CD4-positive, alpha-beta memory T cell (primary cell): ENCODE measurements at regions of chr9 and their contacts with region 1.

Region 1: DNA sequence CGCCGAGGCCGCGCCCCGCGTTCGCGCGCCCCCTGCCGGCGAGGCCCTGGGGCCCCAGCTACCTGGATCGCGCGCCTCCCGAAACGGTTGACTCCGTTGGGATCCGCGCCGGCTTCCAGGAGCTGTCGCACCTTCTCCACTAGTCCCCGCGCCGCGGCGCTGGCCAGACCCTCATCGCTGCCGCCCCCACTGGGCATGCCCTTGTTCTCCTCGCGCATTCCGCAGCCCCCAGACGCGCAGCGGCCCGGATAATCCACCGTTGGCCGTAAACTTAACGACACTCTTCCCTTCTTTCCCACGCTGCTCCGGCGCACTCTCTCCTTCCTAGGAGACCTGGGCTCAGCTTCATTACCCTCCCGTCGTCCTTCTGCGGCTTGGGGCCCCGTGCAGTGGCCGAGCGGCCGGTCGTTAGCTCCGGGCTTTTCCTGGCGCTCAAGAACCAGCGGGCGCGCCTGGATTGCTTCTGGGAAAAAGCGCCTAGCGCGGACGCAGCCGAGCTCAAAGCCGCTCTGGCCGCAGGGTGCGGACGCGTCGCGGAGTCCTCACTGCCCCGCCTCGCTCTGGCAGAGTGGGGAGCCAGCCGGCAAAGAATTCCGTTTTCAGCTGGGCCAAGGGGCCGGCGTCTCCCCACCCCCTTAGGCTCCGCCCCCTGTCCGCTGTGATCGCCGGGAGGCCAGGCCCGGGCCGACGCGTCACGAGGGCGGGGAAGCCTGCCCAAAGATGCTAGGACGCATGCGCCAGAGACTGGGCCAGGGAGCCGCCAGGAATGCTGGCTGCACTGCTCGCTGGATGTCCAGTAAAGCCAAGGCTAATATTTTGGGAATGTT is at the start of gene CDKN2B:
- DNase-seq: peak; percentile 64 to 71 (median 65)
- H3K4me3 ChIP-seq: peak within 1 kb of the TSS; percentile 8 to 65
- H3K4me3 Mint-ChIP-seq: peak within 1 kb of the TSS; percentile 69 to 90 (median 84)
- H3K27ac ChIP-seq: peak within 1 kb of the TSS; percentile 5
- H3K27ac Mint-ChIP-seq: peak within 1 kb of the TSS in 6 of 7 donors; percentile 16 to 81 (median 56)
- H3K4me1 ChIP-seq: peaks cover 29% of the 10 kb centered on the region
- H3K4me1 Mint-ChIP-seq: peaks cover 15 to 27% (median 21%) of the 10 kb centered on the region in 4 donors
- H3K27me3 ChIP-seq: peaks cover 49% of the 10 kb centered on the region
- H3K27me3 Mint-ChIP-seq: peaks cover 26 to 30% of the 10 kb centered on the region in 2 donors
- total RNA-seq, gene CDKN2B: 0.64 TPM

Region 2: DNA sequence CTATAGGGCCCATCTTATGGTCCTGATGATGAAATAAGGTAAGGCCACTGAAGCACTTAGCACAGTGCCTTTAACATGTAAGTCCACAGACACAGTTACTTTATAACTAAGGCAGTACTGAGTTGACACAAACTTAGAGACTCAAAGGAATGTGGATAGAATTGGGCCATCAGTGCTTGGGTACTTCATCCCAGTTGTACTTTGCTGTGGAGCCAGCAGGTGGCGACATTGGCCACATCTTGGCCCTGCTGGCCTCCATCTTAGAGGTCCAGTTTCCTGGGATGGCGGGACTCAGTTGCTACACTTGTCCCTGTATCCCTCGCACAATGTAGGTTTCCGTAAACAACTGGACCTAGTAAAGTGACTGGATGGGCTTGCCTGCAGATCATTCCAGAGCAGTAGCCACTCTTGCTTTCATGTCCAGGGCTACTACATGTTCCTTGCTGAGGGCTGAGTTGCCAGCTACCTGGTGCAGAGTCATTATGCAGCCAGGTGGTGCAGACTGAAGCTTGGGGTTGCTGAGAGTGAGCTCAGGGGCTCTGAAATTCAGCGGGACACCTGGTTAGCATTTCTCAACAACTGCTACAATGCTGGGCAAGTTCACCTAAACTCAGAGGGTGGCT is 195.9 kb before region 1 on chr9:
- CTCF ChIA-PET with region 1: interaction called, 355 read pairs
- POLR2A ChIA-PET with region 1: interaction called, 23 read pairs
- intact Hi-C with region 1: loop called (anchors 1 kb)
- DNase-seq: peak; percentile 59 to 71 (median 64)
- H3K4me3 ChIP-seq: no peak overlapping the region
- H3K4me3 Mint-ChIP-seq: peak overlapping the region in 2 of 8 donors; percentile 41 to 49
- H3K27ac ChIP-seq: no peak overlapping the region
- H3K27ac Mint-ChIP-seq: peak overlapping the region in 6 of 7 donors; percentile 58 to 85 (median 74)
- H3K4me1 ChIP-seq: peaks cover 14% of the 10 kb centered on the region
- H3K4me1 Mint-ChIP-seq: peaks cover 9 to 21% (median 16%) of the 10 kb centered on the region in 4 donors
- H3K27me3 ChIP-seq: no peaks in the 10 kb centered on the region
- H3K27me3 Mint-ChIP-seq: no peaks in the 10 kb centered on the region

Region 3: DNA sequence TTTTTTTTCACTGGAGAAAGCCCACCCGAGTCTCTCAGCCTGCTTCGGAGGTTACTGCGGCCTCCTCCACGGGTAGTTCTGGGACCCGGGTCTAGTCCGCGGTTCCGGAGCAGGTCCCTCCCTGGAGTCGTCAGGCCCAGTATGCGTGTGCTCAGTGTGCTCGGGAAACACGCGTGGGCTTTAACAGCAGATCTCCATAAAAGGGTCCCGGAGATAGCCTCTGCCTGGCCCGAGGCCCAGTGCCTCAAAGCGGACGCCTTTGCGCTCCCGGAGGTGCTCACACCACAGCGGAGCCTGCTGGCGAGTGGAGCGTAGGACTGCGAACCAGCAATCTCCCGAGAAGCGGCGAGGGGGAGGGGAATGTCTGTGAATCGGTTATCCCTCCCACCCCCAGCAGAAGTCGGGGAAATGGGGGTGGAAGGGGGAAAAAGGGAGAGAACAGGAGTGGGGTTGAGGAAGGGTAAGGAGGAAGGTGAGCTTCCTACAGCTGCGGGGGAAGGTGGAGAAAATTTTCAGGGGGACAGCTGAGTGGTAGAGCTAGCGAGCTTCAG is 43.5 kb before region 1 on chr9:
- CTCF ChIA-PET with region 1: interaction called, 39 read pairs
- POLR2A ChIA-PET with region 1: interaction called, 6 read pairs
- intact Hi-C with region 1: loop called (anchors 5 kb)
- DNase-seq: peak; percentile 30 to 50 (median 34)
- H3K4me3 ChIP-seq: peak overlapping the region in 1 of 2 donors; percentile 44
- H3K4me3 Mint-ChIP-seq: peak overlapping the region; percentile 57 to 74 (median 64)
- H3K27ac ChIP-seq: no peak overlapping the region
- H3K27ac Mint-ChIP-seq: peak overlapping the region in 5 of 7 donors; percentile 57 to 81 (median 72)
- H3K4me1 ChIP-seq: peaks cover 22% of the 10 kb centered on the region
- H3K4me1 Mint-ChIP-seq: peaks cover 15 to 47% (median 27%) of the 10 kb centered on the region in 4 donors
- H3K27me3 ChIP-seq: peaks cover 69% of the 10 kb centered on the region
- H3K27me3 Mint-ChIP-seq: peaks cover 76 to 88% of the 10 kb centered on the region in 2 donors

Region 4: GRCh38 chr9:21995177-21996086 is 13.5 kb before region 1 on chr9:
- CTCF ChIA-PET with region 1: interaction called, 50 read pairs
- POLR2A ChIA-PET with region 1: interaction called, 9 read pairs
- intact Hi-C with region 1: loop called (anchors 1 kb)
- DNase-seq: peak; percentile 84 to 89 (median 85)
- H3K4me3 ChIP-seq: peak overlapping the region; percentile 92 to 94
- H3K4me3 Mint-ChIP-seq: peak overlapping the region; percentile 93 to 100 (median 98)
- H3K27ac ChIP-seq: peak overlapping the region; percentile 75
- H3K27ac Mint-ChIP-seq: peak overlapping the region; percentile 93 to 98 (median 94)
- H3K4me1 ChIP-seq: peaks cover 21% of the 10 kb centered on the region
- H3K4me1 Mint-ChIP-seq: peaks cover 6 to 33% (median 13%) of the 10 kb centered on the region in 4 donors
- H3K27me3 ChIP-seq: no peaks in the 10 kb centered on the region
- H3K27me3 Mint-ChIP-seq: peaks cover 1 to 3% of the 10 kb centered on the region in 2 donors

Region 5: DNA sequence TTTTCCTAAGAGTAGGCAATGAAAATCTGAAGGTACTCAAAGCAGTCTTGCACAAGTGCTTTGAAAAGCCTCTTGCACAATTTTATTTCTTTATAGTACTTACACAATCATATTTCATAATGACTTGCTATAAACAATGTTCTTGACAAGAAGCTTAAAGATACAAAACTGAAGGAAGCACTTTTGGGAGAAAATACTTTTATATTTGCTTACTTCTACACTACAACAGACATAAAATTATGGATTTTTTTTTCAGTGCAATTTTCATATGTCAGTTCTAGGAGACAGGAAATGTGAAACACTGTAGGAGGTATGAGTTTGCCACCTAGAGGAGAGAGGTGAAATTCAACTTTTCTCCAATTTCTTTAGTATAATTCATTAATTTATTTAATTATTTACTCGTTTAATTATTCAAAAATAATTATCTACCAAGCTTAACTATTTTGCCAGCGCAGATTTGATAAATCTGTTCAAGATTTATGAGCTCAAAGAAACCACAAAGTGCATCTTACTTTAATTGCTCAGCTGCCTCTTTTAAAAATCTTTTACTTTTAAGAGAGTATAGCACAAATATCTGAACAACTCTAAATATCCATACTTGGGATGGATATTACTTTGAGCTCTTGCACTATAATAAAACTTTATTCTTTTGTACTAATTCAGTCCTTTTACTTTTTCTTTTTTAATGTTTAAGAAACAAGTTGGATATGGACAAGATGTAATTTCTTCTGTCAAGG is 29.2 kb after region 1 on chr9:
- CTCF ChIA-PET with region 1: interaction called, 55 read pairs
- POLR2A ChIA-PET with region 1: no interaction called
- intact Hi-C with region 1: loop called (anchors 1 kb)
- DNase-seq: peak in 4 of 5 donors; percentile 22 to 39 (median 32)
- H3K4me3 ChIP-seq: no peak overlapping the region
- H3K4me3 Mint-ChIP-seq: no peak overlapping the region
- H3K27ac ChIP-seq: no peak overlapping the region
- H3K27ac Mint-ChIP-seq: no peak overlapping the region
- H3K4me1 ChIP-seq: peaks cover 11% of the 10 kb centered on the region
- H3K4me1 Mint-ChIP-seq: peaks cover 0 to 8% (median 4%) of the 10 kb centered on the region in 4 donors
- H3K27me3 ChIP-seq: no peaks in the 10 kb centered on the region
- H3K27me3 Mint-ChIP-seq: no peaks in the 10 kb centered on the region

Region 6: GRCh38 chr9:22053178-22053577 is 44.2 kb after region 1 on chr9:
- CTCF ChIA-PET with region 1: interaction called, 12 read pairs
- POLR2A ChIA-PET with region 1: interaction called, 3 read pairs
- intact Hi-C with region 1: no loop called
- DNase-seq: no peak
- H3K4me3 ChIP-seq: no peak overlapping the region
- H3K4me3 Mint-ChIP-seq: peak overlapping the region in 1 of 8 donors; percentile 0
- H3K27ac ChIP-seq: no peak overlapping the region
- H3K27ac Mint-ChIP-seq: peak overlapping the region in 3 of 7 donors; percentile 1 to 37 (median 29)
- H3K4me1 ChIP-seq: peaks cover 30% of the 10 kb centered on the region
- H3K4me1 Mint-ChIP-seq: peaks cover 13 to 32% (median 21%) of the 10 kb centered on the region in 4 donors
- H3K27me3 ChIP-seq: no peaks in the 10 kb centered on the region
- H3K27me3 Mint-ChIP-seq: no peaks in the 10 kb centered on the region

Region 7: GRCh38 chr9:22452415-22453010 is 443.6 kb after region 1 on chr9:
- CTCF ChIA-PET with region 1: interaction called, 13 read pairs
- POLR2A ChIA-PET with region 1: no interaction called
- intact Hi-C with region 1: no loop called
- DNase-seq: peak; percentile 29 to 48 (median 35)
- H3K4me3 ChIP-seq: no peak overlapping the region
- H3K4me3 Mint-ChIP-seq: no peak overlapping the region
- H3K27ac ChIP-seq: no peak overlapping the region
- H3K27ac Mint-ChIP-seq: no peak overlapping the region
- H3K4me1 ChIP-seq: peaks cover 3% of the 10 kb centered on the region
- H3K4me1 Mint-ChIP-seq: peaks cover 0 to 7% (median 3%) of the 10 kb centered on the region in 4 donors
- H3K27me3 ChIP-seq: peaks cover 14% of the 10 kb centered on the region
- H3K27me3 Mint-ChIP-seq: peaks cover 23 to 31% of the 10 kb centered on the region in 2 donors